Common myeloid progenitor, CD34-positive (primary cell): ENCODE measurements at regions of chr12 and their contacts with region 1.

Region 1: GRCh38 chr12:102169922-102170621 is 27.6 kb downstream of the PMCH start:
- DNase-seq: peak; percentile 40 to 64 (median 50)
- H3K4me3 ChIP-seq: no peak overlapping the region
- H3K27ac ChIP-seq: no peak overlapping the region
- H3K4me1 ChIP-seq: peaks cover 0 to 5% (median 0%) of the 10 kb centered on the region in 4 experiments
- H3K27me3 ChIP-seq: no peaks in the 10 kb centered on the region

Region 2: GRCh38 chr12:102144221-102144620 is 25.9 kb before region 1 on chr12:
- CTCF ChIA-PET with region 1: interaction called, 17 read pairs
- POLR2A ChIA-PET with region 1: no interaction called
- DNase-seq: no peak
- H3K4me3 ChIP-seq: no peak overlapping the region
- H3K27ac ChIP-seq: no peak overlapping the region
- H3K4me1 ChIP-seq: no peaks in the 10 kb centered on the region
- H3K27me3 ChIP-seq: no peaks in the 10 kb centered on the region

Region 3: DNA sequence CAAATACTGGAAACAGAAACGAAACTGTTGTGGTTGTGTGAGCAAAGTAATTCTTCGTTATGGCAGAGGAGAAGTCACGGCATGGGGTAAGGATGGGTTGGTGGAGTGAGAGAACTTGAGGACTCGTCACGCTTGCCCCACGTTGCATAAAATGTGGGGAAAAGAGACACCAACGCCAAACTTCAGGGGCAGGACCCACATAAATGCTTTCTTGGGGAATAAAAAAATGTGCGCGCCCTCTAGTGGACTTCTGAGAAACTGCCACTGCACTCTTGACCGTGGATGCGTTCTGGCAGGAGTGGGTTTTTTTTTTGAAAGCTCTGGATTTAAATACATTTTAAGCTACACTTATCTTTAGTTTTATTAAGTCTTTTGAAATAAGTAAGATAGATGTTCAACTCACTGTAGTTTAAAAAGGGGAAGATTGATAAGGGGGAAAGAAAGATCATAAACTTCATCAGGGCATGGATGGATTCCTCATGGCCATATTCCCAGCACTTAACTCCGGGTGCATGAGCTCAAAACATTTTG is 314.4 kb after region 1 on chr12:
- CTCF ChIA-PET with region 1: interaction called, 14 read pairs
- POLR2A ChIA-PET with region 1: no interaction called
- DNase-seq: peak; percentile 54 to 71 (median 69)
- H3K4me3 ChIP-seq: peak overlapping the region in 4 of 7 experiments; percentile 47 to 78 (median 56)
- H3K27ac ChIP-seq: no peak overlapping the region
- H3K4me1 ChIP-seq: peaks cover 9 to 27% (median 16%) of the 10 kb centered on the region in 4 experiments
- H3K27me3 ChIP-seq: no peaks in the 10 kb centered on the region